ENCODE measurements at regions of chr14 and their contacts with region 1.

Region 1: DNA sequence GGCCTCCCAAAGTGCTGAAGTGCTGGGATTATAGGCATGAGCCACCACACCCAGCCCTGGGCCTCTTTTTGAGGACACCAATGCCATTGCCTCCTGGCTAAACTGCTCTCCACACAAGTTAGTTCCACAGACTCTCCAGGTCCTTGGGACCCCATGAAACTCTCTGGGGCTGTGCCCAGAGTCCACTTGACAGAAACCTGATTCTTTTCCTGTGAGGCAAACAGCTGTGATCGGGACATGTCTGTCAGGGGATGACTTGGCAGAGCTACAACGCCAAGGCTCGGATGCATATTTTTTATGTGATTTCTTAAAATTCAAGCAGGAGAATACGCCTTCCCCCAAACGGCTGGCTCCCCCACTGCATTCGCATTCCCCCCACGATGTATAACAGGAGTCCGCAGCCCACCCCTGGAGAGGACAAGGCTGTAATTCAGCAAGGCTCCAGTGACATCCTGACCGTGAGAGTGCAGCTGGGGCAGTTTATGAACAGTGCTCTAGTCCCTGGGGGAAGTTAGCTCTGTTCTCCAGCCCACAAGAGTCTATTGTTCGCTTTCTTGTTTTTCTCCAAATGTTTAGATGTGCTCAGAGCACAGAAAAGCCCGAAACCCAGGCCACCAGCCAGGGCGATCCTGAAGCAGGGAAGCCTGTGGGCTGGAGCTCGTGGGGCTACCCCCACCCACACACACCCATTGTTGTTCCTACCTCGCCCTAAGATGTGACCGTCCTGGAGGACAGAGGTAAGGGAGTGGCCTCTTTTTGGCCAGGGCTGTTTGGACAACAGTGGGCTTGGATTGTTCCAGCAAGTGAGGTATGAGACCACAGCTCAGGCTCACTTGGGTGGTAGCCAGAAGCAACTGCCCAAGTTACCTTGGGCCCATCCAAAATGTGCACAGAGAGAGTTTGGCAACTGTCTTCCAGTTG is 159.5 kb downstream of the ZFP36L1 start:
- DNase-seq: no peak
- ATAC-seq: peak; percentile 35 to 52 (median 46)
- H3K4me3 ChIP-seq: no peak overlapping the region
- H3K27ac ChIP-seq: peak overlapping the region; percentile 37
- H3K4me1 ChIP-seq: peaks cover 18% of the 10 kb centered on the region
- H3K27me3 ChIP-seq: no peaks in the 10 kb centered on the region
- CTCF ChIP-seq: no peak

Region 2: GRCh38 chr14:68232300-68233055 is 400.9 kb before region 1 on chr14:
- intact Hi-C with region 1: no loop called
- DNase-seq: no peak
- ATAC-seq: peak; percentile 96 to 97 (median 97)
- H3K4me3 ChIP-seq: no peak overlapping the region
- H3K27ac ChIP-seq: peak overlapping the region; percentile 90
- H3K4me1 ChIP-seq: peaks cover 51% of the 10 kb centered on the region
- H3K27me3 ChIP-seq: no peaks in the 10 kb centered on the region
- CTCF ChIP-seq: no peak

Region 3: DNA sequence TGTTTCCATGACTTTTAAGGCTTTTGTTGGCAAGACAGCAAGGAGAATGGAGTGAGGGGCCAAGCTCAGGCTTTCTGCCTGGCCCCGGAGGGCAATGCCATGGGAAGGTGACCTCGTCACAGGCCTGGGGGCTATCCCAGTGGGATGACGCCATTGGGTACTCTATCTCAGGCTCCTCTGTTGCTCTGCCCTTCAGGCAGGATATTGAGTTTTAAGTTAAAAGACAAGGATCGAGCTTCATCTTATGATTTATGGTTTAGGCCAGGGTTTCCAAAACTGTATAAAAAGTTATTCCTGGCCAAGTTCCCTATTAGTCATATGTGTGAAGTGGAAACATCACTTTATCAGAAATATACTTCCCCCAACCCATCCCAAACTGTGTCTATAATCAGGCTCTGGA is 31.8 kb after region 1 on chr14:
- intact Hi-C with region 1: loop called in 1 of 2 experiments (anchors 5 kb)
- DNase-seq: no peak
- ATAC-seq: no peak
- H3K4me3 ChIP-seq: no peak overlapping the region
- H3K27ac ChIP-seq: peak overlapping the region; percentile 51
- H3K4me1 ChIP-seq: peaks cover 20% of the 10 kb centered on the region
- H3K27me3 ChIP-seq: no peaks in the 10 kb centered on the region
- CTCF ChIP-seq: no peak

Measured in psoas muscle (tissue), 8 donors.